Panc1 (cell line): ENCODE measurements at regions of chr6 and their contacts with region 1.

Region 1: DNA sequence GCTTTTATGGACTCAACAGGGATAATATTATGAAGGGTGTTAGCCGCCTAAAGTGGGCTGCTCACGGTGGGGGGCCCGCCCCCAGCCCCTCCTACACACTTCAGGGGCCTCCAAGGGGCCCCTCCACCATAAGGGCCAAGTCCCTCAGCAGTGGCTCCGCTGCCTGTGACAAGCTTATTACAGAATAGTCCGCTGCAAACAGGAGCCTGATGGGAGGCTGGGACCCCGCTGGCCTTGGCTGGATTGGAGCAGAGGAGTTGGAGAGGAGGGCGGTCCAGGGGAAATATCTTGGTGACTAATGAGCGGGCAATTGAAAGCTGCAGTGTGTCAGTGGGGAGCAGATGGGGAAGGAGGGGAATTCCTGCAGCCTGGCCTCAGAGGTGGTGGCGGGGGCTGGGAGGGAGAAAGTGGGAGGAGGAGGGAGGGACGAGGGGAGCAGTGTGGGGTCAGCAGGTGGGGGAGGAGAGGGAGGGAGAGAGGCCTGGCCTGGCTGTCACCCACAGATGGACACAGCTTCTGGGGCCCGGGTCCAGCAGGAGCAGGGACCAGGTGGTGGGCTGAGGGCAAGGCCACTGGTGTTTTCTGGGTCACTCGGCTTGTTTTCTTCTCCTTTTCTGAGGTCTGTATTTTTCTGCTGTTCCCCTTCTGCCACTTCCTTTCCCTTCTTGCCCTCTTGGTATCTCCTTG is 57.6 kb upstream of the FOXP4 start:
- DNase-seq: no peak
- ATAC-seq: peak; percentile 49
- H3K4me3 ChIP-seq: no peak overlapping the region
- H3K27ac ChIP-seq: no peak overlapping the region
- H3K4me1 ChIP-seq: no peaks in the 10 kb centered on the region
- H3K27me3 ChIP-seq: no peaks in the 10 kb centered on the region
- CTCF ChIP-seq: no peak

Region 2: GRCh38 chr6:41451039-41451438 is 37.5 kb before region 1 on chr6:
- CTCF ChIA-PET with region 1: interaction called, 13 read pairs
- POLR2A ChIA-PET with region 1: interaction called, 3 read pairs
- in situ Hi-C with region 1: no loop called
- intact Hi-C with region 1: no loop called
- DNase-seq: no peak
- ATAC-seq: peak; percentile 43; the same call in 1 of the 2 replicates
- H3K4me3 ChIP-seq: no peak overlapping the region
- H3K27ac ChIP-seq: no peak overlapping the region
- H3K4me1 ChIP-seq: no peaks in the 10 kb centered on the region
- H3K27me3 ChIP-seq: no peaks in the 10 kb centered on the region; the same call in 1 of the 2 replicates
- CTCF ChIP-seq: no peak; the same call in 1 of the 2 replicates

Region 3: DNA sequence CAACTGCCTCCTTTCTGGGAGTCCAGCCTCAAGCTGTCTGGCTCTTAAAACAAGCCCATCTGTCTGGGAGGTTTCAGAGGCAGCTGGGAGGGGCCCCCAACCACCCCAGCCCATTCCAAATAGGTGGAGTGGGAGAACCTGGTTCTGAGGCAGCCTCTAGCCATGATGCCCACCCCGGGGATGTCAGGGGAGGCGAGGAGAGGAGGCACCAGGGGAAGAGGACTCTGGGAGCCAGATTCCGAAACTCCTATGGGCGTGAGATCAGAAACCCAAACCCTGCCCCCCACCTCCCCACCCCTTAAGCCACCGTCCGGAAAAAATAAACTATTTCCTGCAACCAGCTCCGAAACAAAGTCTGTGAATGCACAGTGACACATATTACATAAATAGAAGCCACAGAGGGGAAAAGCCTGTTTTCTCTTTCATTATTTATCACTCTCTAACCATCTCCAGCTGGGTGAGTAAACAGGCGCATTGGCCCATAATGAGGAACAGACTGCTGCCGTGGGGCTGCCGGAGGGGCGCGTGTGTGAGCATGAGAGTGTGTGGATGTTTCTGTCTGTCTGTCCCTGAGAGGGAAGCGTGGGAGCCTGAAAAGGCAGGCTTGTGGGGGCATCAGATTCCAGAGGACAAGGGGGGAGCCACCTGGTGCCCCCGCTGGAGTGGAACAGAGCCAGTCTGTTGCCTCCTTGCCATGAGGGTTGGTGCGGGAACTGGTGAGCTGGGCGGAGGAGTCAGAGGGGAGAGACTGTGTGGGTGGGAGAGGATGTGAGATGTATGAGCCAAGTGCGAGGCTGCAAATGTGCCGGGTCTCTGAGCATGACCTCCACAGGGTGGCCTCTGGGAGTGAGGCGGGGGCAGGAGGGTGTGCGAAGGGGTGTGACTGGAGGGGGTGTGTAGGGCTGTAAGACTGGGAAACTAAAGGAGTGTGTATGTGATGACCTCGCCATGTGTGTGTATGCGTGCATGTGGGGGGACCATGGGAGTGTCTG is 43.3 kb after region 1 on chr6:
- CTCF ChIA-PET with region 1: no interaction called
- POLR2A ChIA-PET with region 1: interaction called, 13 read pairs
- in situ Hi-C with region 1: no loop called
- intact Hi-C with region 1: no loop called
- DNase-seq: no peak
- ATAC-seq: no peak
- H3K4me3 ChIP-seq: no peak overlapping the region
- H3K27ac ChIP-seq: no peak overlapping the region
- H3K4me1 ChIP-seq: peaks cover 3% of the 10 kb centered on the region; the same call in 1 of the 2 replicates
- H3K27me3 ChIP-seq: no peaks in the 10 kb centered on the region; the same call in 1 of the 2 replicates
- CTCF ChIP-seq: no peak